ENCODE measurements at regions of chr20 and their contacts with region 1.

Region 1: DNA sequence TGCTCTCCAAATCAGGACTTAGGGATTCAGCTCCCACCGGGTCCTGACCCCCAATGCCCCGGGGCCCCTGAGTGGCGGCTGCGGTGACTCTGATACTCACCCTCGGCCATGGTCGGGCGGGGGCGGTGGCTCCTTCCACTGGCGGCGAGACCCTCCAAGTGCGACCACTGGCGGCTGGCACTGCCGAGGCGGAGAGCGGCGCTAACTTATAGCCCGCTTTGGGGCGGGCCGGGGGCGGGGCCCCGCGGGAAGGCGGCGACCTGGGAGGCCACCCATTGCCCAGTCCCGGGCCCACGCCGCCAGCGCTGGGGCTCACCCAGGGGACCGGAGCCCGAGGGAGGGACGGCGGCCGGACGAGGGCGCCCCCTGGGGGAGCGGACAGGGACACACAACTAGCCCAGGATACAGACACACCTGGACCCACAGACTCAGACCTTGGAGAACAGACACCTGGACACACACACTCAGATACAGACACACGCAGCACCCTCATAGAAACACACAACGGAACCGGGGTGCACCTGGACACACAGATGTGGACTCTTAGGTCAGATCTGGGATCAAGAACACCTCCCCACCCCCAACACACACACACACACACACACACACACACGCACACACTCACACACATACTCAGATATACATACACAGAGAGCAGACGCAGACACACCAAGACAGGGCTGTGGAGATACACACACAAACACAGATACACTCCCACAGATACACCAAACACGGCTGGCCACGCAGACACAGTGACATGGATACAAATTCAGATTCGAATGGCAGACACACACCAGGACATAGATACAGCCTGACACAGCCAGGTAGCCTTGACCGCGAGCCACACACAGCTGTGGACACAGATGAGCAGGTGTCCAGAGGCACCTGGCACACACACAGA is at the start of gene TGM2:
- DNase-seq: no peak
- H3K4me3 ChIP-seq: peak within 1 kb of the TSS; percentile 60 to 66 (median 66)
- H3K27ac ChIP-seq: peak within 1 kb of the TSS; percentile 80 to 93 (median 87)
- H3K4me1 ChIP-seq: peaks cover 59 to 91% (median 81%) of the 10 kb centered on the region in 4 donors
- H3K27me3 ChIP-seq: no peaks in the 10 kb centered on the region
- CTCF ChIP-seq: peak; percentile 89 to 95 (median 90)
- EP300 ChIP-seq: no peak
- POLR2A ChIP-seq: peak; percentile 49
- total RNA-seq, gene TGM2: 170 to 385 (median 212) TPM

Region 2: GRCh38 chr20:38057351-38057972 is 107.9 kb before region 1 on chr20:
- intact Hi-C with region 1: loop called (anchors 5 kb)
- DNase-seq: peak; percentile 95
- H3K4me3 ChIP-seq: no peak overlapping the region
- H3K27ac ChIP-seq: peak overlapping the region in 1 of 4 donors; percentile 6
- H3K4me1 ChIP-seq: peaks cover 0 to 16% (median 8%) of the 10 kb centered on the region in 4 donors
- H3K27me3 ChIP-seq: no peaks in the 10 kb centered on the region
- CTCF ChIP-seq: peak; percentile 83 to 87 (median 85)
- EP300 ChIP-seq: no peak
- POLR2A ChIP-seq: no peak

Region 3: GRCh38 chr20:38073307-38074071 is 91.8 kb before region 1 on chr20:
- intact Hi-C with region 1: loop called (anchors 1 kb)
- DNase-seq: peak; percentile 94
- H3K4me3 ChIP-seq: no peak overlapping the region
- H3K27ac ChIP-seq: peak overlapping the region; percentile 80 to 90 (median 82)
- H3K4me1 ChIP-seq: peaks cover 30 to 61% (median 60%) of the 10 kb centered on the region in 4 donors
- H3K27me3 ChIP-seq: no peaks in the 10 kb centered on the region
- CTCF ChIP-seq: peak; percentile 80 to 84 (median 84)
- EP300 ChIP-seq: no peak
- POLR2A ChIP-seq: no peak

Region 4: DNA sequence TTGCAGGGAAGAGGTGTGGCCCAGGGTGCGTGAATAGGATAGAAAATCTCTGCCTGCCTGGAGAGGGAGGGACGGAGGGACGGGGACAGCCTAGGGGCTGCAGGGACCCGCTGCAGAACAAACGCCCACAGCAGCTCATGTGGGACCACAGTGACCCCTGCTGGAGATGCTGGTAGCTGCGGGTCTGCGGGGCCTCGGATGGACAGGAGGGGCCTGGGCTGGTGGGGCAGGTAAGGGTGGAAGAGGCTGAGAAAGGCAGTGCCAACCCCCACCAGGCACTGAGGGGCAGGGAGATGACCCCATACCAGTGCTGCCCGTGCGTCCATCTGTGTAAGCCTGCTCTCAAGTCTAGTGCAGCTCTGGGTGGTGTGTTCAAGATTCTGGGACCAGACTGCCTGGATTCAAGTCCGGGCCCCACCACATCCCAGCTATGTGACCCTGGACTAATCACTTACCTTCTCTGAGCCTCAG is 55.8 kb after region 1 on chr20:
- intact Hi-C with region 1: loop called (anchors 5 kb)
- DNase-seq: no peak
- H3K4me3 ChIP-seq: no peak overlapping the region
- H3K27ac ChIP-seq: no peak overlapping the region
- H3K4me1 ChIP-seq: peaks cover 4 to 24% (median 14%) of the 10 kb centered on the region in 4 donors
- H3K27me3 ChIP-seq: no peaks in the 10 kb centered on the region
- CTCF ChIP-seq: peak; percentile 79 to 93 (median 88)
- EP300 ChIP-seq: no peak
- POLR2A ChIP-seq: no peak

Region 5: DNA sequence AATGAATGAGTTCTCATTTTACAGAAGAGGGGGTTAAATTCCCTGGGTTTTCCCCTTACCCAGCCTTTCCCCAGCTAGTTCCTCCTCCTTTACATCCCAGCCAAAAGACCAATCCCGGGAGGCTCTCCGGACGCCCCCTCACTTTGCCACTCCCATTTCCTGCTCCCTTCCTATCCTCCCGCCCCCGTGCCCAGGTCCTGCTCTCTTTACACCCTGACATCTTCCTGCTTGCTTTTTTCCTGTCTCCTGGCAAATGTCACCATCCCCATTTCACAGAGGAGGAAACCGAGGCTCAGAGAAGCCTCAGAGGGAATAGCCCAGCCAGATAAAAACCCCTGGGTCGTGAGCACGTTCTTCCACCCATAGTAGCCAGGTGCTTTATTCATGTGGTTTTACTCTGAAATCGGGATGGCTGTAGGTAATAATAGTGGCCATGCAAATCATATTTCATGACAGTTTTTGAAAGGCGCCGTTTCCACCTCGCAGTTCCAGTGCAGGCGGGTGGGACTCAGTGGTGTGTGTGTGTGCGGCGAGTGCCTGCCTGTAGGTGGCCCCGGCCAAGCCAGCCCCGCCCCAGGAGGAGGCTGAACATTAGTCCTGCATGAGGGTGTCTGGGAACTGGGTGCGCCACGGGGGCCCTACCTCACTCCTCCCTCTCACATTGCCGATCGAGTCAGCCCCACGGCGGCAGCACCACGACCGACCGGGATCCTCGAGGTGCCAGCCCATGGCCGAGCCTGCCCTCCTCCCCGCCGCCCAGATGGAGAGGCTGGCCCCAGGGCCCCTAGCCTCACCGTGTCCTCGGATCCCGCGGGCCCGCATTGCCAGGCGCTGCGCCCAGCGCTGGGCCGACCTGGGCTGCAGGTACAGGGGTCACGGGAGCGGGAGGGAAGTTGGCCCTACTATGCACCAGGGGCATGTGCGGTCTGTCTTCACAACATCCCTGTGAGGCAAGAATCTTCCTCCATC is 436.2 kb after region 1 on chr20 and contains the start of gene ARHGAP40:
- intact Hi-C with region 1: no loop called
- DNase-seq: no peak
- H3K4me3 ChIP-seq: no peak within 1 kb of the TSS
- H3K27ac ChIP-seq: no peak within 1 kb of the TSS
- H3K4me1 ChIP-seq: peaks cover 0 to 10% (median 7%) of the 10 kb centered on the region in 4 donors
- H3K27me3 ChIP-seq: peaks cover 0 to 58% (median 14%) of the 10 kb centered on the region in 4 donors
- CTCF ChIP-seq: peak in 1 of 3 experiments; percentile 3
- EP300 ChIP-seq: no peak
- POLR2A ChIP-seq: no peak
- total RNA-seq, gene ARHGAP40: 0.42 TPM in 1 of 4 donors, not detected in the others